ENCODE measurements at regions of chr19 and their contacts with region 1.

Region 1: DNA sequence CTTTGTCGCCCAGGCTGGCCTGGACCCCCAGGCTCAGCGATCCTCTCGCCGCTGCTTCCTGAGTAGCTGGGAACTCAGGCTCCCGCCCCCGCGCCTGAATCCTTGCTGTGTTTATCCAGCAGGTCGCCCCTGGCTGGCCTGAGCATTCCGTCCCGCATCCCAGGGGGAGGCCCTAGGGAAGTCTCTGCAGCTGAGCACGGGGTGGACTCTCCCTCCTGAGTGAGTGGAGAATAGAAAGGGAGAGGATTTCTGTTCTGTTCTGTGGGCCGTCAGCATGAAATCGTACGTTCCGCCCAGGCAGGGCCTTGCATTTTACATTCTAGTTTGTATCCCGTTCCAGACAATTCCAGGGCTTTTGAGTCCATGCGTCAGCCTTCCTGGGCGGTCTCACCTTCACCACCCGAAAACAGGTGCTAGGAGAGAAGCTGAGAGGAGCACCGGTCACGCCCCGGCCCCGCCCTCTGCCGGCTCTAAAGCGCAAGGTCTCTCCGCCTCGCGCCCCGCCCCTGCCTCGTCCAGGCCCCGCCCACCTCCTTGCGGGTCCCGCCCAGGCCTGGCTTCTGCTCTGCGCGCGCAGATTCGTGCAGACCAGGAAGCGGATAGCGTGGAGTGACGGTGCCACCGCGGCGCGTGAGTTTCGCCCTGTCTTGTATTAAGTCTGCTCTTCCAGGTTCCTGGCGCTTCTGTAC is at the start of gene ZNF761:
- DNase-seq: peak; percentile 94 to 97
- ATAC-seq: peak; percentile 100
- H3K4me3 ChIP-seq: peak within 1 kb of the TSS; percentile 72
- H3K27ac ChIP-seq: peak within 1 kb of the TSS; percentile 66
- H3K4me1 ChIP-seq: no peaks in the 10 kb centered on the region
- H3K27me3 ChIP-seq: no peaks in the 10 kb centered on the region
- CTCF ChIP-seq: peak; percentile 34
- total RNA-seq, gene ZNF761: 1.5 to 4.4 (median 3.6) TPM

Region 2: GRCh38 chr19:53394974-53395839 is 36.3 kb before region 1 on chr19 and contains the start of gene ZNF765:
- intact Hi-C with region 1: loop called in 1 of 2 experiments (anchors 5 kb)
- DNase-seq: peak; percentile 94 to 96
- ATAC-seq: peak; percentile 100
- H3K4me3 ChIP-seq: peak within 1 kb of the TSS; percentile 87
- H3K27ac ChIP-seq: peak within 1 kb of the TSS; percentile 57
- H3K4me1 ChIP-seq: peaks cover 5% of the 10 kb centered on the region
- H3K27me3 ChIP-seq: no peaks in the 10 kb centered on the region
- CTCF ChIP-seq: peak; percentile 43
- total RNA-seq, gene ZNF765: 1.8 to 2.9 (median 2.6) TPM

Region 3: DNA sequence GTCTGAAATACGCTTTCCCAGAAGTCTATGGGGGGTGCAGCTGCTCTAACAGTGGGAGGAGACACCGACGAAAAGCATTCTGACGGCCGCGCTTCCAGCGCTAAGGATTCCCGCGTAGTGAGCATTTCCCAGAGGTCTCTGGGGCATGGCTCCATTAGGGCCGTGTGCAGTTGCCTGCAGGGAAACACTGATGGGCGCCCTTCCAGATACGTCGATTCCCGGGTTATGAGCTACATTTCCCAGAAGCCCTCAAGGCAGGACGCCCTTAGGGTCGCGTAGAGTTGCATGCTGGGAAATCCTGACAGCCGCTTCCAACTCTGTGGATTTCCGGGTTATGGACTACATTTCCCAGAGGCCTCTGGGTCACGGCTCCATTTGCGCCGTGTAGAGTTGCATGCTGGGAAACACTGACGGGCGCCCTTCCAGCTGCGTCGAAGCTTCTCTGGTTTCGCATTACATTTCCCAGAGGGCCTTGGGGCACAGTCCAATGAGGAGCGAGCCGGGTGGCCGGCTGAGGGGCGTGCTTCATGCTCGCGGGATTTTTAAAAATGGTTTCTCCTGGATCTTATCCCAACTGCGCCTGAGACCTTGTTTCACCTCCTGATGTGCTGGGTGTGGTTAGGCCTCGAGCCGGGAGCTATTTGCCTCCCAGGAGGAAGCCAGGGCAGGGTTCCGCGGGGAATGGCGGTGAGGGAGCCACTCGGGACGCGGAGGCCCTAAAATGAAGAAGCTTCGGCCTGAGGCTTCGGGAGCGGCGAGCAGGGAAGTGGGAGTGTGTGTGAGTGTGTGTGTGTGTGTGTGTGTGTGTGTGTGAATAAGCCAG is 89.2 kb after region 1 on chr19:
- intact Hi-C with region 1: loop called in 1 of 2 experiments (anchors 5 kb)
- DNase-seq: peak; percentile 95 to 98
- ATAC-seq: peak; percentile 97 to 99 (median 98)
- H3K4me3 ChIP-seq: peak overlapping the region; percentile 67
- H3K27ac ChIP-seq: peak overlapping the region; percentile 87
- H3K4me1 ChIP-seq: peaks cover 5% of the 10 kb centered on the region
- H3K27me3 ChIP-seq: no peaks in the 10 kb centered on the region
- CTCF ChIP-seq: no peak